ENCODE measurements at regions of chr19 and their contacts with region 1.

Region 1: DNA sequence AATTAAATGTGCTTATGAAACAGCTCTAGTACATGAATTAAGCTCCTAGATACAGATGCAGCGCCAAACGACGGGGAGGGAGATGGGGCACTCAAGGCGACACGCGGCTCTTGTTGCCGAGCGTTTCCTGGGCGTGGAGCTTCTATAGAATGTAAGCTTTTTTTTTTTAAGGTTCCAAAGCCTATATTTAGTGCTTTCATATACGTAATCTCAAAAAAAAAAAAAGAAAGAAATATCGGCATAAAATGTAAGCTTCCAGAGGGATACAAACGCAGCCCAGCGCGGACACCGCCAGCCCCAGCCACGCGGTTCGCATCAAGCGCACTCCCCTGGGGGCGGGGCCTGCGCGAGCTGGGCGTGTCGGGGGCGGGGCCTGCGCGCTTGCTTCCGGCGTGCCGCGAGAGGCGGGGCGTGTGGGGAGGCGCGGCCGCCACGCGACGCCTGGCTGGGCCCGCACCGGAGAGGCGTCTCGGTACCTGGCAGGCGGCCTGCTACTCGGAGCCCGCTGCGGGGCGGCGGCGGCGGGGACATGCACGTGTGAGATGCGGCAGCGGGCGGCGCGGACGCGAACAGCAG is at the start of gene URI1:
- DNase-seq: peak; percentile 70
- ATAC-seq: peak; percentile 99
- H3K4me3 ChIP-seq: peak within 1 kb of the TSS; percentile 97
- H3K27ac ChIP-seq: peak within 1 kb of the TSS; percentile 74
- H3K4me1 ChIP-seq: peaks cover 8% of the 10 kb centered on the region
- H3K27me3 ChIP-seq: no peaks in the 10 kb centered on the region; the same call in 1 of the 2 replicates
- CTCF ChIP-seq: no peak
- POLR2A ChIP-seq: no peak
- RAD21 ChIP-seq: no peak
- total RNA-seq, gene URI1: 43.2 and 95.8 TPM in 2 replicates

Region 2: GRCh38 chr19:29923653-29924052 is 18.3 kb before region 1 on chr19:
- CTCF ChIA-PET with region 1: no interaction called
- POLR2A ChIA-PET with region 1: no interaction called
- dilution Hi-C with region 1: no loop called
- in situ Hi-C with region 1: no loop called
- intact Hi-C with region 1: no loop called
- DNase-seq: no peak
- ATAC-seq: no peak
- H3K4me3 ChIP-seq: no peak overlapping the region
- H3K27ac ChIP-seq: no peak overlapping the region
- H3K4me1 ChIP-seq: no peaks in the 10 kb centered on the region
- H3K27me3 ChIP-seq: no peaks in the 10 kb centered on the region
- CTCF ChIP-seq: no peak
- POLR2A ChIP-seq: no peak
- RAD21 ChIP-seq: no peak

Region 3: GRCh38 chr19:30001791-30002190 is 59.9 kb after region 1 on chr19:
- CTCF ChIA-PET with region 1: no interaction called
- POLR2A ChIA-PET with region 1: no interaction called
- dilution Hi-C with region 1: no loop called
- in situ Hi-C with region 1: no loop called
- intact Hi-C with region 1: no loop called
- DNase-seq: peak; percentile 19
- ATAC-seq: peak; percentile 62
- H3K4me3 ChIP-seq: no peak overlapping the region
- H3K27ac ChIP-seq: no peak overlapping the region
- H3K4me1 ChIP-seq: no peaks in the 10 kb centered on the region; the same call in 1 of the 2 replicates
- H3K27me3 ChIP-seq: no peaks in the 10 kb centered on the region
- CTCF ChIP-seq: peak; percentile 20; the same call in 1 of the 2 replicates
- POLR2A ChIP-seq: no peak
- RAD21 ChIP-seq: no peak

Region 4: DNA sequence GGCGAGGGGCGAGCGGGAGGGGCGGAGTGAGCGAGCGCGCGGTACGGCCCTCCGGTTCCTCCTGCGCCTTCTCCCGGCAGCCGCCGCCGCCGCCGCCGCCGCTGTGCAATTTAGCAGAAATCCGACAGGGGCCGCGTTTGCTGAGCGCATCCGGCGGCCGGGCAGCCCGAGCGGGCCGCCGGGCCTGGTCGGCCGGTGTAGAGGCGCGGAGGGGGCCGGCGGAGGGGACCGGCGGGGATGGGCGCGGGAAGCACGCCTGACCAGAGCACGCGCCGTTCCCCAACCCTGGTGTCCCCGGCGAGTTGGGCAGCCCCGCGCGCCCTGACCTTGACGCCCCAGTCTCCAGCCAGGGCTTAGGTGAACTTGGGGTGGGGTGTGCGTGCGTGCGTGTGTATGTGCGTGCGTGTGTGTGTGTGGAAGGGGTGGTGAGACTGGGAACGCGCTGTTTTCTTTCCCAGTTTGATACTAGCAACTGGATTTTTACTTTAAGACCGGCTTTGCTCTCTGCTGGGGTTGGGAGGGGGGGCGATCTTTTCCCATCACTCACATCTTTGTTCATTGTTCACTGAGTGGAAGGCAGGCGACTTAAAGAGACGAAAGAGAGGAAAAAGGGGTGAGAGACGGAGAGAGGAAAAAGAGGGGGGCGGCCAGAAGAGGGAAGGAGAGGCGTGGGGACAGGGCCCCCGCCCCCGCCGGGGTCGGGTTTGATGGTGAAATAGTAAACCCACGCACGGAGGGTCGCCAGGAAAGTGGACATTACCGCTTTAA is 285.9 kb after region 1 on chr19:
- CTCF ChIA-PET with region 1: no interaction called
- POLR2A ChIA-PET with region 1: no interaction called
- dilution Hi-C with region 1: no loop called
- in situ Hi-C with region 1: no loop called
- intact Hi-C with region 1: loop called (anchors 10 kb)
- DNase-seq: peak; percentile 24
- ATAC-seq: peak; percentile 92
- H3K4me3 ChIP-seq: peak overlapping the region; percentile 51
- H3K27ac ChIP-seq: no peak overlapping the region
- H3K4me1 ChIP-seq: peaks cover 4% of the 10 kb centered on the region; the same call in 1 of the 2 replicates
- H3K27me3 ChIP-seq: peaks cover 60% of the 10 kb centered on the region
- CTCF ChIP-seq: peak; percentile 41
- POLR2A ChIP-seq: no peak
- RAD21 ChIP-seq: peak; percentile 12; the same call in 1 of the 2 replicates

Measured in IMR-90 (cell line).